BJ (cell line): ENCODE measurements at regions of chr2 and their contacts with region 1.

Region 1: GRCh38 chr2:133780099-133780839 is 212.0 kb upstream of the NCKAP5 start:
- DNase-seq: no peak
- H3K4me3 ChIP-seq: no peak overlapping the region
- H3K27me3 ChIP-seq: no peaks in the 10 kb centered on the region
- CTCF ChIP-seq: peak; percentile 82

Region 2: DNA sequence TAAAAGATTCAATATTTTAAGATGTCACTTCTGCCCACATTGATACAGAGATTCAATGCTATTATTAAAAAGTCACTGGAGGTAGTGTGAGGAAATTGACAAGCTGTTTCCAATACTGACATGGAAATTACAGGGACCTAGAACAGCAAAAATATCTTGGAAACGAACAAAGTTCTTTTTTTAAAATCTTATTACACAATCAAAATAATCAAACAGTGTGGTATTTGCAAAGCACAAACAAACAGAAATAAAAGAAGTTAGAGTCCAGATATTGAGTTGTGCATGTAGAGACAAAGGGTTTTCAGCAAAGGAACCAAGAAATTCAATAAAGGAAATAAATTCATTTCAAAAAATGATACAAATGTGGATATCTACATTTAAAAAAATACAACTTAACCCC is 581.6 kb before region 1 on chr2:
- CTCF ChIA-PET with region 1: no interaction called
- POLR2A ChIA-PET with region 1: no interaction called
- DNase-seq: no peak
- H3K4me3 ChIP-seq: no peak overlapping the region
- H3K27me3 ChIP-seq: no peaks in the 10 kb centered on the region
- CTCF ChIP-seq: no peak

Region 3: GRCh38 chr2:133568172-133568571 is 212.1 kb before region 1 on chr2 and contains the start of gene NCKAP5:
- CTCF ChIA-PET with region 1: interaction called, 16 read pairs
- POLR2A ChIA-PET with region 1: no interaction called
- DNase-seq: no peak
- H3K4me3 ChIP-seq: peak within 1 kb of the TSS; percentile 15
- H3K27me3 ChIP-seq: no peaks in the 10 kb centered on the region
- CTCF ChIP-seq: 0 out of 2 replicates have a peak, but pooled peaks have one; percentile 7
- polyA plus RNA-seq, gene NCKAP5: 2.1 and 2.5 TPM in 2 replicates

Region 4: GRCh38 chr2:133791191-133791590 is 10.9 kb after region 1 on chr2:
- CTCF ChIA-PET with region 1: interaction called, 10 read pairs
- POLR2A ChIA-PET with region 1: no interaction called
- DNase-seq: peak; percentile 59
- H3K4me3 ChIP-seq: no peak overlapping the region
- H3K27me3 ChIP-seq: no peaks in the 10 kb centered on the region
- CTCF ChIP-seq: no peak

Region 5: DNA sequence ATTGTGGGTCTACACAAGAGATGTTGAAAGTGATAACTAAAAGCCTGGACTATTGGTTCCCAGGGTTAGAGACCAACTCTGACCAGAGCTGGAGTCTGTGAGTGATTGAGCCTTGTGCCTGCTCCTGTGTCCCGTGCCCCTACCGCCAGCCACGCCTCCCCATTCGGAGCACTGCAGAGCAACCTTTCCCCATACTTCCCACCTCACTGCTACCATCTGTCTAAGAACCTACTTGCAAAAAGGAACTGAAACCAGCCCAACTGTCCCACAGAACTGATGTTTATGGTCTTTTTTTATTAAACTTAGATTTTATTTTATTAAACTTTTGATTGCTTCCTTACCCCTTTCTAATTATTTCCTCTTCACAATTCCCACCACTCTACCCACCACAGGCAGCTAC is 173.3 kb after region 1 on chr2:
- CTCF ChIA-PET with region 1: no interaction called
- POLR2A ChIA-PET with region 1: no interaction called
- DNase-seq: no peak
- H3K4me3 ChIP-seq: no peak overlapping the region
- H3K27me3 ChIP-seq: 0 out of 2 replicates have a peak, but pooled peaks cover 1% of the 10 kb centered on the region
- CTCF ChIP-seq: no peak

Region 6: DNA sequence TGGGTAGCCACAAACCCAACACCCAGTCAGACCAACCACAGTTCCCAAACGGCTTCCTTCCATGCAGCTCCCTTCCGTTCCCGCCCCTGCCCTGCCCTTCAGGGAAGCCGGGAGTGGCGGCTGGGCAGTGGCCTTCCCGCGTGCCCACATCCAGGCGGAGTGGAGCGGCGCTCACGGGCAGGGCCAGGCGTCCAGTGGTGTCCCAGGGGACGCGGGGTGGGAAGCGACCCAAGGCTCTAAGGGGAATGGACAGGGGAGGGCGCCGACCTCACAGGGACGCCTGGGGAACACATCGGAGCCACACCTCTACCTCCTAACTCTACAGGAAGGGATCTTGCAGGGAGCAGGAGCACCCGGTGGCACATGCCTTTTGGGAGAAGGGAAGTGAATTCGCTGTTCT is 247.7 kb after region 1 on chr2:
- CTCF ChIA-PET with region 1: no interaction called
- POLR2A ChIA-PET with region 1: no interaction called
- DNase-seq: no peak
- H3K4me3 ChIP-seq: no peak overlapping the region
- H3K27me3 ChIP-seq: peaks cover 1% of the 10 kb centered on the region; the same call in 1 of the 2 replicates
- CTCF ChIP-seq: no peak